Endothelial cell of umbilical vein (primary cell): ENCODE measurements at regions of chr3 and their contacts with region 1.

Region 1: DNA sequence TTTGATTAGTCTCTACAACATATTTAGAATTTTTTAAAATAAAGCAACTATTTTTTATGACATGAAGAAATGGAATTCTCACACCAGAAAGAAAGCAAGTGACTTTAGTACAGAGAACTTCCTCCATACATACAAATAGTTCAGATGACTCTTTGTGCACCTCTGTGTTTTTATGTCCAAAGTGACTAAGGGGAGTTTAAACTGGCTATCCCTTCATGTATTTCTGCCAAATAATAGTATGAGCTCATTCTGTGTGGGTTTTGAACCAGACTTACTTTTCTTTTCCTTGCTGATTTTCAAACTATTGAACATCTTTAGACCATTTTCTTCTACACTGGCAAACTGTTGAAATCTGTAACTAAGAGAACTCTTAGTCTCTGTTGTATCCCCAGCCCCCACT is 196.3 kb downstream of the EPHA3 start:
- DNase-seq: no peak
- H3K4me3 ChIP-seq: no peak overlapping the region
- H3K27ac ChIP-seq: no peak overlapping the region
- H3K4me1 ChIP-seq: no peaks in the 10 kb centered on the region
- H3K27me3 ChIP-seq: no peaks in the 10 kb centered on the region
- CTCF ChIP-seq: no peak
- POLR2A ChIP-seq: no peak

Region 2: GRCh38 chr3:88955274-88955673 is 348.4 kb before region 1 on chr3:
- CTCF ChIA-PET with region 1: no interaction called
- POLR2A ChIA-PET with region 1: no interaction called
- dilution Hi-C with region 1: no loop called
- intact Hi-C with region 1: no loop called
- DNase-seq: no peak
- H3K4me3 ChIP-seq: no peak overlapping the region
- H3K27ac ChIP-seq: no peak overlapping the region
- H3K4me1 ChIP-seq: no peaks in the 10 kb centered on the region
- H3K27me3 ChIP-seq: no peaks in the 10 kb centered on the region
- CTCF ChIP-seq: no peak
- POLR2A ChIP-seq: no peak

Region 3: GRCh38 chr3:89260721-89261120 is 43.0 kb before region 1 on chr3:
- CTCF ChIA-PET with region 1: no interaction called
- POLR2A ChIA-PET with region 1: no interaction called
- dilution Hi-C with region 1: no loop called
- intact Hi-C with region 1: loop called (anchors 2 kb)
- DNase-seq: no peak
- H3K4me3 ChIP-seq: no peak overlapping the region
- H3K27ac ChIP-seq: no peak overlapping the region
- H3K4me1 ChIP-seq: no peaks in the 10 kb centered on the region
- H3K27me3 ChIP-seq: no peaks in the 10 kb centered on the region
- CTCF ChIP-seq: no peak
- POLR2A ChIP-seq: no peak

Region 4: DNA sequence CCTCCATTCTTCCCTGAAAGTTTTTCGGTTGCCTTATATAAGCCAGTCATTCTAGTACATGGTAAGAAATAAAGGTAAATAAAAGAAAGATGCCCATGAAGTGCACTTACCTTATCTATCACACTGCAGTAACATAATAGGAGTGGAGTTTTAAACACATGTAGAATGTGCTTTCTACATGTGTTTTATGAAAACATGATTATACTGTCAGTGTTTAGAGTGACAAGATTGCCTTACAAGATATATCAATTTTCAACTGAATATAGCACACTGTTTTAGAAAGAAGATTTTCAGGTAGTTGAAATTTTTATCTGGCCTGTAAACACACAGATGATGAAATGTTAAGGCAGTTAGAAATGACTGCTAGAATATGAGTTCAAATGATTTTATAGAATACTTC is 23.3 kb after region 1 on chr3:
- CTCF ChIA-PET with region 1: no interaction called
- POLR2A ChIA-PET with region 1: no interaction called
- dilution Hi-C with region 1: no loop called
- intact Hi-C with region 1: no loop called
- DNase-seq: no peak
- H3K4me3 ChIP-seq: no peak overlapping the region
- H3K27ac ChIP-seq: no peak overlapping the region
- H3K4me1 ChIP-seq: no peaks in the 10 kb centered on the region
- H3K27me3 ChIP-seq: no peaks in the 10 kb centered on the region
- CTCF ChIP-seq: no peak
- POLR2A ChIP-seq: no peak